ENCODE measurements at regions of chr6 and their contacts with region 1.

Region 1: GRCh38 chr6:36120979-36121786 is 9.1 kb upstream of the MAPK13 start:
- DNase-seq: no peak
- H3K4me3 ChIP-seq: no peak overlapping the region
- H3K27ac ChIP-seq: no peak overlapping the region
- H3K4me1 ChIP-seq: peaks cover 4 to 8% (median 7%) of the 10 kb centered on the region in 4 experiments; a peak in 6 of 7 replicates
- H3K27me3 ChIP-seq: no peaks in the 10 kb centered on the region
- CTCF ChIP-seq: no peak
- EP300 ChIP-seq: no peak
- POLR2A ChIP-seq: no peak
- RAD21 ChIP-seq: no peak

Region 2: DNA sequence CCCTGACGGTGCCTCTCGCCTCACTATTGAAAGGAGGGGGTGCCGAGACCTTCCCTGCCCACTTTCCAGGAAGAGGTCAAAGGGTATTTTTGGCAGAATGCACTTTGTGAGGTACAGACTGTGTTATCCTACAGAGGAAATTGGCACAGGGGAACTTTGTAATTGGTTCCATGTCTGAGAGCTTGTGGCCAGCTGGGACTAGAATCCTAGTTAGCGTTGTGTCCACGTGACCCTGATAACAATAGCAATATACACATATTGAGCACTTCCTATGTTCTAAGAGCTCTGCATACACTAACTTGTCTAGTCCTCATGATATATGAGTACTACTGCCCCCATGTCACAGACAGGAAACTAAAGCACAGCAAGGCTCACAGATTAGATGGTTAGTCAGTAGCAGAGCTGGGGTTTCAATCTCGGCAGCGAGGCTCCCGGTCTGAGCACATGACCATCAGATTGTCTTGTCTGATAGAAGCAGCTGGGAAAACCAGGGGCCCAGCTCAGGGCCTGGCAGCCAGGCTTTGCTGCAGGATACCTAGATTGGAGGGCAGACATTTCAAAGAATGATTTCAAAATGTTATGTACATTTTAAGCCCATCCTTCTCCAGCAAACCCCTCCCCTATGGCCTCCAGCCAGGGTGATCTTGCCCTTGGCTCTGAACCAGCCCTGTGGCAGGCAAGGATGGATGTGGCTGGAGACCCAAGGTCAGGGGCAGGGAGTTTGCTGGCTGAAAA is 10.5 kb after region 1 on chr6:
- CTCF ChIA-PET with region 1: interaction called, 9 read pairs
- POLR2A ChIA-PET with region 1: interaction called, 10 read pairs
- DNase-seq: no peak
- H3K4me3 ChIP-seq: peak overlapping the region in 2 of 4 experiments; percentile 46 to 59; a peak in 3 of 8 replicates
- H3K27ac ChIP-seq: no peak overlapping the region
- H3K4me1 ChIP-seq: peaks cover 7 to 18% (median 15%) of the 10 kb centered on the region in 4 experiments
- H3K27me3 ChIP-seq: peaks cover 0 to 10% (median 3%) of the 10 kb centered on the region in 4 experiments; a peak in 4 of 7 replicates
- CTCF ChIP-seq: no peak
- EP300 ChIP-seq: no peak
- POLR2A ChIP-seq: no peak
- RAD21 ChIP-seq: no peak

Region 3: GRCh38 chr6:36241728-36242127 is 120.5 kb after region 1 on chr6:
- CTCF ChIA-PET with region 1: no interaction called
- POLR2A ChIA-PET with region 1: no interaction called
- DNase-seq: no peak
- H3K4me3 ChIP-seq: no peak overlapping the region
- H3K27ac ChIP-seq: no peak overlapping the region
- H3K4me1 ChIP-seq: peaks cover 6 to 15% (median 11%) of the 10 kb centered on the region in 4 experiments
- H3K27me3 ChIP-seq: no peaks in the 10 kb centered on the region; a peak in 1 of 7 replicates
- CTCF ChIP-seq: no peak
- EP300 ChIP-seq: no peak
- POLR2A ChIP-seq: no peak
- RAD21 ChIP-seq: no peak